Activated CD8-positive, alpha-beta T cell treated with anti-CD3 and anti-CD28 coated beads, Interleukin-2, amount 10 ng/mL, durations not matched to agents 7 days and 5 days (primary cell): ENCODE measurements at regions of chr2 and their contacts with region 1.

Region 1: GRCh38 chr2:174473796-174474195 is 13.0 kb downstream of the GPR155 start:
- DNase-seq: no peak
- ATAC-seq: no peak
- H3K4me3 Mint-ChIP-seq: no peak overlapping the region
- H3K27ac Mint-ChIP-seq: no peak overlapping the region
- H3K4me1 Mint-ChIP-seq: peaks cover 4% of the 10 kb centered on the region
- H3K27me3 Mint-ChIP-seq: no peaks in the 10 kb centered on the region

Region 2: DNA sequence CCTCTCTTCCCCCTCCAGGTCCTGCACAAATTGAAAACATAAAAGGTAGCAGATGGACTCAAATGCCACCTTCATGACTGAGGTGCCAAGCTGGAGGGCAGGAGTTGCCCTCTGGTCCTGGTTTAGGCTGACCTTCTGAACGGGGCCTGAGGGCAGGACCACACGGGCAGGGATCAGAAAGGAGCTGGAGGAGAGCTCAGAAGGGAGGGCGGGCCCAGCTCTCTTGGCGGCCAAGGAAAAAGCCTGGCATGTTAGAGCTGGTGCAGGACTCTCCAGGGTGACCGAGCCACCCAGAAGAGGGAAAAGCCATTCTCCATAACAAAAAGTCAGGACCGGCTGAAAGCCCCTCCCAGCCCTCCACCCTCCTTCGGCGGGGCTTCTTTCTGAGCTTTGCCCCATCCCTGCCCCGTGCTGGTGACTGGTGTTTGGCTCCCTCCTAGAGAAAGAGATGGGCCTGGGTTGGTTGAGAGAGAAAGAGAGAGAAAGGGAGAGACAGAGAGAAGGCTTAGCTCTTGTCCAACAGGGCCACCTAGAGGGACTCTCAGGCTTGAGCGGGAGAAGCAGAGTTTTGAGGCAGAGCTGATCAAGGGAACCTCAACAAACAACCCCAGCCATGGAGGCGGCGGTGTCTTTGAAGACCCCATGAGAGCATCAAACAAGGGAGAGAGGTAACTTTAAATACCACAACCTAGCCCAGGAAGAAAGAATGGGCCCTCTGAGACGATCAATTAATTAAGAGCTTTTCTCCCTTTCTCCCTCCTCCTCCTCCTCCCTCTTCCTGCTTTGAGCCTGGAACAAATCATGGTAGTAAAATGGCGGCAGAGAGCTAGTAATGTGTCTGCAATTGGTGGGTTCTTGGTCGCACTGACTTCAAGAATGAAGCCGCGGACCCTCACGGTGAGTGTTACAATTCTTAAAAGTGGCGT is 73.0 kb after region 1 on chr2:
- CTCF ChIA-PET with region 1: interaction called, 16 read pairs
- POLR2A ChIA-PET with region 1: no interaction called
- DNase-seq: peak; percentile 66
- ATAC-seq: peak; percentile 87
- H3K4me3 Mint-ChIP-seq: no peak overlapping the region
- H3K27ac Mint-ChIP-seq: peak overlapping the region; percentile 32
- H3K4me1 Mint-ChIP-seq: peaks cover 13% of the 10 kb centered on the region
- H3K27me3 Mint-ChIP-seq: peaks cover 3% of the 10 kb centered on the region